ENCODE measurements at regions of chr22 and their contacts with region 1.

Region 1: GRCh38 chr22:37267135-37267587 is 15.1 kb upstream of the CYTH4 start:
- DNase-seq: peak; percentile 65 to 76 (median 72)
- H3K4me3 ChIP-seq: peak overlapping the region; percentile 69 to 73
- H3K4me3 Mint-ChIP-seq: peak overlapping the region; percentile 83 to 93 (median 89)
- H3K27ac ChIP-seq: peak overlapping the region; percentile 69
- H3K27ac Mint-ChIP-seq: peak overlapping the region; percentile 83 to 98 (median 95)
- H3K4me1 ChIP-seq: peaks cover 26% of the 10 kb centered on the region
- H3K4me1 Mint-ChIP-seq: peaks cover 22 to 46% (median 32%) of the 10 kb centered on the region in 4 donors
- H3K27me3 ChIP-seq: no peaks in the 10 kb centered on the region
- H3K27me3 Mint-ChIP-seq: no peaks in the 10 kb centered on the region

Region 2: DNA sequence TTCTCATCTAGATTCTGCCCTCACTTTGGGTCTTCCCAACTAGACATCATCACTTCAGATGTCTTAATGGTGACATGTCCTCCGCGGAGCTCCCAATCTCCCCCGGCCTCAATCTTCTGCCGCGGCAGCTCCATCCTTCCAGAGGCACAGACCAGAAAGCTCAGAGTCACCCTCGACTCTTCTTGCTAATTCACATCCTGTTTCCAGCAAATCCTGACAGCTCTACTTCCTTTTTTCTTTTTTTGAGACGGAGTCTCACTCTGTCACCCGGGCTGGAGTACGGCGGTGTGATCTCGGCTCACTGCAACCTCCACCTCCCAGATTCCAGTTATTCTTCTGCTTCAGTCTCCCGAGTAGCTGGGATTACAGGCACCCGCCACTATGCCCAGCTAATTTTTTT is 618.1 kb before region 1 on chr22:
- CTCF ChIA-PET with region 1: no interaction called
- POLR2A ChIA-PET with region 1: no interaction called
- intact Hi-C with region 1: no loop called
- DNase-seq: no peak
- H3K4me3 ChIP-seq: no peak overlapping the region
- H3K4me3 Mint-ChIP-seq: no peak overlapping the region
- H3K27ac ChIP-seq: no peak overlapping the region
- H3K27ac Mint-ChIP-seq: no peak overlapping the region
- H3K4me1 ChIP-seq: no peaks in the 10 kb centered on the region
- H3K4me1 Mint-ChIP-seq: no peaks in the 10 kb centered on the region
- H3K27me3 ChIP-seq: peaks cover 3% of the 10 kb centered on the region
- H3K27me3 Mint-ChIP-seq: peaks cover 32 to 35% of the 10 kb centered on the region in 2 donors

Region 3: GRCh38 chr22:37300551-37301017 is 33.4 kb after region 1 on chr22:
- CTCF ChIA-PET with region 1: interaction called, 8 read pairs
- POLR2A ChIA-PET with region 1: interaction called, 15 read pairs
- intact Hi-C with region 1: no loop called
- DNase-seq: peak; percentile 43 to 66 (median 48)
- H3K4me3 ChIP-seq: peak overlapping the region in 1 of 2 donors; percentile 21
- H3K4me3 Mint-ChIP-seq: peak overlapping the region; percentile 9 to 85 (median 80)
- H3K27ac ChIP-seq: peak overlapping the region; percentile 72
- H3K27ac Mint-ChIP-seq: peak overlapping the region; percentile 92 to 97 (median 96)
- H3K4me1 ChIP-seq: peaks cover 92% of the 10 kb centered on the region
- H3K4me1 Mint-ChIP-seq: peaks cover 47 to 82% (median 64%) of the 10 kb centered on the region in 4 donors
- H3K27me3 ChIP-seq: no peaks in the 10 kb centered on the region
- H3K27me3 Mint-ChIP-seq: no peaks in the 10 kb centered on the region

Region 4: GRCh38 chr22:37316875-37317371 is 49.8 kb after region 1 on chr22:
- CTCF ChIA-PET with region 1: interaction called, 42 read pairs
- POLR2A ChIA-PET with region 1: interaction called, 111 read pairs
- intact Hi-C with region 1: loop called (anchors 1 kb)
- DNase-seq: peak; percentile 63 to 76 (median 69)
- H3K4me3 ChIP-seq: no peak overlapping the region
- H3K4me3 Mint-ChIP-seq: no peak overlapping the region
- H3K27ac ChIP-seq: no peak overlapping the region
- H3K27ac Mint-ChIP-seq: peak overlapping the region in 3 of 7 donors; percentile 8 to 48 (median 12)
- H3K4me1 ChIP-seq: peaks cover 32% of the 10 kb centered on the region
- H3K4me1 Mint-ChIP-seq: peaks cover 15 to 47% (median 31%) of the 10 kb centered on the region in 4 donors
- H3K27me3 ChIP-seq: no peaks in the 10 kb centered on the region
- H3K27me3 Mint-ChIP-seq: peaks cover 0 to 2% of the 10 kb centered on the region in 2 donors

Region 5: DNA sequence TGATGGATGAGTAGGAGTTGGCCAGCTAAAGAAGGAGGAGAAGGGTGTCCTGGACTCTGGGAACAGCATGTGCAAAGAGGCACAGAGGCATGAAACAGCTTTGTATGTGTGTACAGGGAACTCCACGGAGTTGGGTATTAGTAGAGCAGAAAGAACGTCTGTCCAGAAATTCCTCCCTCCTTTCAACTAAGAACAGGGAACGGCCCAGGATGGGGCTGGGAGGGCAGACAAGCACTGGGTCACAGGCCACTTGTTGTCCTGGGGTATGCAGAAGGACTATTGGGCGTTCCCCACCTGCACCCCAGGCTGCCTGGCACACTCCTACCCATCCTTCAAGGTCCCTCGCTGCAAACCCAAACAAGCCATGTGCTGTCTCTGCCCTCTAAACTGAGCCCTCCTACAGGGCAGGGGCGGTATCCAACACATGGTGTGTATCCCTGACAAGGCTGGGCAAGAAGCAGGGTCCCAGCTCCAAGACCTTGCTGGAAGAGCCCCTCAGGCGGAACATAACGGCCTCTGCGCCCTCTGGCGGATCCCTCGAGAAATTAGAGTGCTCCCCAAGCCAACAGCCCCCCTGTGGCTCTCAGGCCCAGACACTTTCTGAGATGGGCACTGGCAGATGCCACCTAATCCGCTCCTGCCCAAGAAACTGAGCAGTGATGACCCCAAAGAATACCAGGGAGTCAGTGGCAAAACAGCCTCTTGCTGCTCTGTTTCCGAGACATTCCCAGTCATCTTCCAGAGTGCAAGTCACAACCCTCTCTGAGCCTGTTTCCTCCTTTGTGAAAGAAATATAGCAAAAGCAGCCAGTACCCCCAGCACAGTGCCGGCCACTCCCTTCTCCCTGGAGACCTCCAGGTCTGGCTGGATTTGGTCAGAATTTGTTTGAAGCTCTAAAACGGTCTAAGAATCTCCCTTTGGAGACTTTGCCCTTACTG is 161.8 kb after region 1 on chr22:
- CTCF ChIA-PET with region 1: interaction called, 41 read pairs
- POLR2A ChIA-PET with region 1: interaction called, 3 read pairs
- intact Hi-C with region 1: loop called (anchors 1 kb)
- DNase-seq: peak in 4 of 5 donors; percentile 45 to 58 (median 55)
- H3K4me3 ChIP-seq: no peak overlapping the region
- H3K4me3 Mint-ChIP-seq: peak overlapping the region in 6 of 8 donors; percentile 9 to 67 (median 32)
- H3K27ac ChIP-seq: no peak overlapping the region
- H3K27ac Mint-ChIP-seq: peak overlapping the region in 1 of 7 donors; percentile 11
- H3K4me1 ChIP-seq: peaks cover 16% of the 10 kb centered on the region
- H3K4me1 Mint-ChIP-seq: peaks cover 3 to 22% (median 13%) of the 10 kb centered on the region in 4 donors
- H3K27me3 ChIP-seq: peaks cover 28% of the 10 kb centered on the region
- H3K27me3 Mint-ChIP-seq: peaks cover 43 to 56% of the 10 kb centered on the region in 2 donors

Region 6: GRCh38 chr22:37566903-37567820 is 300.0 kb after region 1 on chr22:
- CTCF ChIA-PET with region 1: interaction called, 5 read pairs
- POLR2A ChIA-PET with region 1: no interaction called
- intact Hi-C with region 1: loop called (anchors 2 kb)
- DNase-seq: peak; percentile 87 to 91 (median 89)
- H3K4me3 ChIP-seq: peak overlapping the region; percentile 6 to 15
- H3K4me3 Mint-ChIP-seq: peak overlapping the region; percentile 58 to 85 (median 70)
- H3K27ac ChIP-seq: no peak overlapping the region
- H3K27ac Mint-ChIP-seq: peak overlapping the region; percentile 8 to 81 (median 57)
- H3K4me1 ChIP-seq: peaks cover 23% of the 10 kb centered on the region
- H3K4me1 Mint-ChIP-seq: peaks cover 11 to 36% (median 25%) of the 10 kb centered on the region in 4 donors
- H3K27me3 ChIP-seq: peaks cover 11% of the 10 kb centered on the region
- H3K27me3 Mint-ChIP-seq: peaks cover 14 to 24% of the 10 kb centered on the region in 2 donors

Measured in CD4-positive, alpha-beta memory T cell (primary cell).